Psoas muscle (tissue), 8 donors: ENCODE measurements at regions of chr9 and their contacts with region 1.

Region 1: GRCh38 chr9:112074250-112075008 is 100.7 kb downstream of the SUSD1 start:
- DNase-seq: peak; percentile 55 to 60
- ATAC-seq: peak; percentile 90 to 94 (median 92)
- H3K4me3 ChIP-seq: peak overlapping the region; percentile 7
- H3K27ac ChIP-seq: peak overlapping the region; percentile 61
- H3K4me1 ChIP-seq: peaks cover 21% of the 10 kb centered on the region
- H3K27me3 ChIP-seq: no peaks in the 10 kb centered on the region
- CTCF ChIP-seq: peak; percentile 93

Region 2: GRCh38 chr9:111759762-111760639 is 314.4 kb before region 1 on chr9:
- intact Hi-C with region 1: loop called (anchors 1 to 2 kb)
- DNase-seq: no peak
- ATAC-seq: peak; percentile 81 to 88 (median 82)
- H3K4me3 ChIP-seq: no peak overlapping the region
- H3K27ac ChIP-seq: no peak overlapping the region
- H3K4me1 ChIP-seq: no peaks in the 10 kb centered on the region
- H3K27me3 ChIP-seq: no peaks in the 10 kb centered on the region
- CTCF ChIP-seq: peak; percentile 75

Region 3: DNA sequence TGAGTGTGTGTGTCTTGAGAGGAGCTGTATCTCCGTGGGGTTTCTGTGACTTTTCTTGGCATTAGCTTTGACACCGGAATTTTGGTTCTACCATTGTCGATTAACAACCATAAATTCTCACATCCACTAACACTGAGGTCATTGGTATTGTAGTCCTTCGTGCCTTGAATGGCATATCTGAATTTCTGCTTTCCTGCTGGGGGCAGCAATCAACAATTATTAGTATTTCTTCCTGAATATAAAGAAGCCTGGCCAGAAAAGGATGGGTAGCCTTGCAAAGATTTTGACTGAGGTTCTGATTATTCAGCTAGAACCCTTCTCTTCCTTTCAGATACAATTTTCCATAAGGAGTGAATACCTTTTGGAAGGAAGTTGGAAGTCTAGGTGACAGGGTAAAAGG is 246.2 kb before region 1 on chr9:
- intact Hi-C with region 1: loop called in 1 of 2 experiments (anchors 5 kb)
- DNase-seq: no peak
- ATAC-seq: no peak
- H3K4me3 ChIP-seq: no peak overlapping the region
- H3K27ac ChIP-seq: no peak overlapping the region
- H3K4me1 ChIP-seq: no peaks in the 10 kb centered on the region
- H3K27me3 ChIP-seq: no peaks in the 10 kb centered on the region
- CTCF ChIP-seq: peak; percentile 14

Region 4: DNA sequence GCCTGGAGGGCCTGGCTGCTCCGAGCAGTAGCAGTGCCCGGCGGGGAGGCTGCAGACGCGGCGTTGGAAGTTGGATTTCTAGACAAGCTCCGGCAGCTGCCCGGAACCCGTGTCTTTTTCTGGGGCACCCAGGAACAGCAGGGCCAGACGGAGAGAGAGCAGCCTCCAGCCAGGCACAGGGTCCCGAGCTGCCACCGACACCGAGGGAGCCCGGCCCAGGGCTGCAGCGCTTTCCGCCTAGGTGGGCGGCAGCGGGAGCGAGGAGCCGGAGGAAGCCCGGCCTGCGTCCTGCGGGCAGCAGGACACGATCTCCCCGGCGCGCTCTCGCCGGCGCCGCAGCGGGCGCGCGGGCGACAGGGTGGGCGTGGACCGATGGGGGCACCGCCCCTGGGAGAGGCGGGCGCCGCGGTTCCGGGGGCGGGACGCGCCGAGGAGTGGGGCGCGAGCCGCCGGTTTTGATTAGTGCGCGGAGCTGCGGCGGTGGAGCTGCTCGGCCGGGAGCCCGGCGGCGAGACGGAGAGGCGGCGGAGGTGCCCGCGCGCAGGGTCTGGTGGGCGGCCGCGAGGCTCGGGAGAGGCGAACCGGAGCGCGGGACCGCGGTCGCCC is 178.0 kb before region 1 on chr9 and contains the start of gene UGCG:
- intact Hi-C with region 1: loop called in 1 of 2 experiments (anchors 1 kb)
- DNase-seq: peak; percentile 89 to 93
- ATAC-seq: peak; percentile 97 to 98 (median 98)
- H3K4me3 ChIP-seq: peak within 1 kb of the TSS; percentile 95
- H3K27ac ChIP-seq: peak within 1 kb of the TSS; percentile 92
- H3K4me1 ChIP-seq: peaks cover 39% of the 10 kb centered on the region
- H3K27me3 ChIP-seq: no peaks in the 10 kb centered on the region
- CTCF ChIP-seq: no peak
- total RNA-seq, gene UGCG: 9.6 to 56.2 (median 20.2) TPM

Region 5: GRCh38 chr9:111957856-111958652 is 116.4 kb before region 1 on chr9:
- intact Hi-C with region 1: loop called in 1 of 2 experiments (anchors 5 kb)
- DNase-seq: no peak
- ATAC-seq: peak; percentile 68 to 83 (median 74)
- H3K4me3 ChIP-seq: peak overlapping the region; percentile 25
- H3K27ac ChIP-seq: peak overlapping the region; percentile 53
- H3K4me1 ChIP-seq: peaks cover 25% of the 10 kb centered on the region
- H3K27me3 ChIP-seq: peaks cover 0 to 5% (median 2%) of the 10 kb centered on the region in 3 donors
- CTCF ChIP-seq: no peak

Region 6: GRCh38 chr9:112174218-112174964 is 100.0 kb after region 1 on chr9:
- intact Hi-C with region 1: no loop called
- DNase-seq: peak; percentile 70 to 81
- ATAC-seq: peak in 3 of 4 donors; percentile 51 to 75 (median 72)
- H3K4me3 ChIP-seq: peak overlapping the region; percentile 67
- H3K27ac ChIP-seq: no peak overlapping the region
- H3K4me1 ChIP-seq: peaks cover 4% of the 10 kb centered on the region
- H3K27me3 ChIP-seq: peaks cover 0 to 17% (median 0%) of the 10 kb centered on the region in 3 donors
- CTCF ChIP-seq: no peak

Region 7: DNA sequence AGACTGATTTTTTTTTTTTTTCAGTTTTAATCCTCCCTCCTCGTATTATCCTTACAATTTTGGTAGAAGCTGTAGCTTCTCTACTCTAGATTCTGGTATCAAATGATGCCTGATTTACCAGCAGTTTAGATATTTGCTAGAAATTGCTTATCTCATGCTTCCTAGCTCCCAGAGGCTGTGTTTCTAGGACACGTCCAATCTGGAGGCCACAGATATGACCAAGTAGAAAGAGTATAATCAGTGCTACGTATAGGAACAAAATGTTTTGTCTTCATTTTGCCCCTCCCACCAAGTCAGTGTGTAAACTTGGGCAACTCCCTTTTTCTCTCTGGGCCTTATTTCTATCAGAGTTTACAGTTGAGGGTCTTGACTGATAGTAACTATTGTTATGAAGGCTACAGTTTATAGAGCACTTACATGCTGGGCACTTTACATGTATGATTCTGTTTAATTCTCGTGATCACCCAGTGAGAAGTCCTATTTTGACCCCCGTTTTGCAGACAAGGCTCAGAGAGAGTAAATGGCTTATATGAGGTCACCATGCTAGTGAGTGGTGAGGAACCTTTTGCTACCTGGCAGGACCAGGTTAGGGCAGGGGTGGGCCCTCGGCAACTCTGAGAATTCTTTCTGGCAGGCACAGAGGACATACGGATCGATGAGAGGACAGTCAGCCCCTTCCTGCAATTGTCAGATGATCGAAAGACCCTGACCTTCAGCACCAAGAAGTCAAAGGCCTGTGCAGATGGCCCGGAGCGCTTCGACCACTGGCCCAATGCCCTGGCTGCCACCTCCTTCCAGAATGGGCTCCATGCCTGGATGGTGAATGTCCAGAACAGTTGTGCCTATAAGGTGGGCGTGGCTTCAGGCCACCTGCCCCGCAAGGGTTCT is 1294.8 kb after region 1 on chr9:
- intact Hi-C with region 1: no loop called
- DNase-seq: no peak
- ATAC-seq: peak in 3 of 4 donors; percentile 34 to 71 (median 55)
- H3K4me3 ChIP-seq: no peak overlapping the region
- H3K27ac ChIP-seq: no peak overlapping the region
- H3K4me1 ChIP-seq: no peaks in the 10 kb centered on the region
- H3K27me3 ChIP-seq: no peaks in the 10 kb centered on the region
- CTCF ChIP-seq: no peak